ENCODE measurements at regions of chr4 and their contacts with region 1.

Region 1: GRCh38 chr4:56958111-56958517 is 19.3 kb downstream of the NOA1 start:
- DNase-seq: peak; percentile 97
- H3K4me3 ChIP-seq: no peak overlapping the region
- H3K27ac ChIP-seq: peak overlapping the region; percentile 50
- H3K4me1 ChIP-seq: peaks cover 9% of the 10 kb centered on the region
- H3K27me3 ChIP-seq: no peaks in the 10 kb centered on the region
- CTCF ChIP-seq: no peak
- POLR2A ChIP-seq: no peak

Region 2: GRCh38 chr4:56164907-56165306 is 793.2 kb before region 1 on chr4:
- CTCF ChIA-PET with region 1: no interaction called
- POLR2A ChIA-PET with region 1: no interaction called
- dilution Hi-C with region 1: no loop called
- intact Hi-C with region 1: no loop called
- DNase-seq: no peak
- H3K4me3 ChIP-seq: no peak overlapping the region
- H3K27ac ChIP-seq: no peak overlapping the region
- H3K4me1 ChIP-seq: no peaks in the 10 kb centered on the region
- H3K27me3 ChIP-seq: no peaks in the 10 kb centered on the region
- CTCF ChIP-seq: no peak
- POLR2A ChIP-seq: no peak

Region 3: DNA sequence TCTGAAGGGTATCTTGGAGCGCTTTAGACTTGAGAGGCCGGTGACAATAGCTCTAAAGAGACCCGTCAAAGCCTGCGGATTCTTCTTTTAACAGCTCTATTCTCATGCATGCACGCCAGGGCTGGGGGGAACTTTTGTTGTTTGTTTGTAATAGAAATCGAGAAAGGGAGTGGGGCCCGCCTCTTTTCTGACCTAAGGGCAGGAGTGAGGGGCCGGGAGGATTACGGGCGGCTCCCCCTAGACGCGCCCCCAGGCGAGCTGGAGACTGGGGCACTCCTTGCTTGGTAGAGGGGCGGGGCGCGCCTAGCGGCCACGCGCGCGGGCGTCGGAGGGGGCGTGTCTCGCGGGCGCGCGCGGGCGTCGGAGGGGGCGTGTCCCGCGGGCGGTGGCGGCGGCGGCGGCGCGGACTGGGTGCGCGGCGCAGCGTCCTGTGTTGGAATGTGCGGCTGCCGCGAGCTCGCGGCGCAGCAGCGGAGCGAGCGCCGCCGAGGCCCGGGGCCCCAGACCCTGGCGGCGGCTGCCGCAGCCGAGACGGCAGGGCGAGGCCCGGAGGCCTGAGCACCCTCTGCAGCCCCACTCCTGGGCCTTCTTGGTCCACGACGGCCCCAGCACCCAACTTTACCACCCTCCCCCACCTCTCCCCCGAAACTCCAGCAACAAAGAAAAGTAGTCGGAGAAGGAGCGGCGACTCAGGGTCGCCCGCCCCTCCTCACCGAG is 50.5 kb before region 1 on chr4 and contains the start of gene REST:
- CTCF ChIA-PET with region 1: interaction called, 9 read pairs
- POLR2A ChIA-PET with region 1: interaction called, 5 read pairs
- dilution Hi-C with region 1: no loop called
- intact Hi-C with region 1: loop called (anchors 1 kb)
- DNase-seq: peak; percentile 68
- H3K4me3 ChIP-seq: peak within 1 kb of the TSS; percentile 96 to 98 (median 98)
- H3K27ac ChIP-seq: peak within 1 kb of the TSS; percentile 84
- H3K4me1 ChIP-seq: peaks cover 17% of the 10 kb centered on the region
- H3K27me3 ChIP-seq: peaks cover 4 to 6% of the 10 kb centered on the region in 2 experiments
- CTCF ChIP-seq: peak in 1 of 2 donors; percentile 0
- POLR2A ChIP-seq: no peak
- total RNA-seq, gene REST: 45.9 and 48.1 TPM in 2 replicates

Measured in endothelial cell of umbilical vein (primary cell).